Ovary (tissue), 10 donors: ENCODE measurements at regions of chr16 and their contacts with region 1.

Region 1: GRCh38 chr16:11964761-11965551 is at the start of gene TNFRSF17:
- DNase-seq: no peak
- H3K4me3 ChIP-seq: no peak within 1 kb of the TSS
- H3K27ac ChIP-seq: no peak within 1 kb of the TSS
- H3K4me1 ChIP-seq: no peaks in the 10 kb centered on the region
- H3K27me3 ChIP-seq: no peaks in the 10 kb centered on the region
- CTCF ChIP-seq: no peak
- EP300 ChIP-seq: no peak
- POLR2A ChIP-seq: no peak
- total RNA-seq, gene TNFRSF17: 0.20 to 0.60 TPM in 2 of 7 donors, not detected in the others

Region 2: DNA sequence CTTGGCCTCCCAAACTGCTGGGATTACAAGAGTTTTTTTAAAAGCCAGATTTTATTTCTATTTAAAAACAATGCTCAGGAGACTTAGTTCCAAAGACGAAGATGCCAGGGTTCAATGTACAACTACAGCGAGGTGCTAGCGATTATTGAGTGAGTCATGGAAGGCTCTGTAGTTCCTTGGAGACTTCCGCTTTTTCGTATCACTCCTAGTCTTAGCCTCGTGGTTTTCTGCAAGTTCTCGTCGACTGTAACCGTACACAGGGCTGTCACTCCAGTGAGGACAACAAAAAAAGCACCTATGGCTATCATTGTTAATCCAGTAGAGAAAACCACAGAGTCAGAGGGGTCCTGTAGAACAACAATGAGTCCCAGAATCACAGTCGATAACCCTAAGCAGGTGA is 145.2 kb before region 1 on chr16:
- intact Hi-C with region 1: no loop called
- DNase-seq: no peak
- H3K4me3 ChIP-seq: no peak overlapping the region
- H3K27ac ChIP-seq: no peak overlapping the region
- H3K4me1 ChIP-seq: no peaks in the 10 kb centered on the region
- H3K27me3 ChIP-seq: no peaks in the 10 kb centered on the region
- CTCF ChIP-seq: no peak
- EP300 ChIP-seq: no peak
- POLR2A ChIP-seq: no peak

Region 3: GRCh38 chr16:11950388-11950787 is 14.6 kb before region 1 on chr16:
- intact Hi-C with region 1: loop called in 1 of 4 experiments (anchors 2 kb)
- DNase-seq: no peak
- H3K4me3 ChIP-seq: no peak overlapping the region
- H3K27ac ChIP-seq: no peak overlapping the region
- H3K4me1 ChIP-seq: no peaks in the 10 kb centered on the region
- H3K27me3 ChIP-seq: no peaks in the 10 kb centered on the region
- CTCF ChIP-seq: no peak
- EP300 ChIP-seq: no peak
- POLR2A ChIP-seq: no peak

Region 4: GRCh38 chr16:12067714-12068401 is 102.9 kb after region 1 on chr16:
- intact Hi-C with region 1: loop called in 3 of 4 experiments (anchors 10 kb)
- DNase-seq: peak; percentile 29 to 76 (median 42)
- H3K4me3 ChIP-seq: no peak overlapping the region
- H3K27ac ChIP-seq: no peak overlapping the region
- H3K4me1 ChIP-seq: peaks cover 9% of the 10 kb centered on the region
- H3K27me3 ChIP-seq: no peaks in the 10 kb centered on the region
- CTCF ChIP-seq: peak; percentile 78 to 86 (median 81)
- EP300 ChIP-seq: no peak
- POLR2A ChIP-seq: no peak